ENCODE measurements at regions of chr3 and their contacts with region 1.

Region 1: GRCh38 chr3:59791774-59792308 is 742.0 kb upstream of the CFAP20DC start:
- DNase-seq: no peak
- ATAC-seq: no peak
- H3K4me3 ChIP-seq: no peak overlapping the region
- H3K27ac ChIP-seq: no peak overlapping the region
- H3K4me1 ChIP-seq: no peaks in the 10 kb centered on the region
- H3K27me3 ChIP-seq: no peaks in the 10 kb centered on the region
- CTCF ChIP-seq: no peak

Region 2: DNA sequence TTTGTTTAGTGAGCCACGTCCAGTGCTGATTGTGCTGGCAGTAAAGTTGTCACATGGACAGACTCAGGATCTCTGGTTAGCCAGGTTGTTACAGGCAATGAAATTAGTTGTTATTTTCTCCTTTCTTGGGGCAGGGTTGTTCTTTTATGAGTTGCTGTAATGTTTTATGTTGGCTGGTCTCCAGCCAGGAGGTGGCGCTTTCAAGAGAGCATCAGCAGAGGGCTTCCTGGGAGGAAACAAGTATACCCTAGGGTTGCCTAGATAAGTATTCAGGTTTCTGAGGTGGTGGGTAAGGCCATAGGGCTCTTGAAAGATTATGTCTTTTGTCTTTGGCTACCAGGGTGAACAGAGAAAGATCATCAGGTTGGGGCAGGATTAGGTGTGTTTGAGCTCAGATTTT is 727.6 kb before region 1 on chr3:
- CTCF ChIA-PET with region 1: interaction called, 13 read pairs
- POLR2A ChIA-PET with region 1: no interaction called
- intact Hi-C with region 1: no loop called
- DNase-seq: peak; percentile 29
- ATAC-seq: no peak
- H3K4me3 ChIP-seq: no peak overlapping the region
- H3K27ac ChIP-seq: no peak overlapping the region
- H3K4me1 ChIP-seq: no peaks in the 10 kb centered on the region
- H3K27me3 ChIP-seq: no peaks in the 10 kb centered on the region
- CTCF ChIP-seq: peak; percentile 59

Region 3: DNA sequence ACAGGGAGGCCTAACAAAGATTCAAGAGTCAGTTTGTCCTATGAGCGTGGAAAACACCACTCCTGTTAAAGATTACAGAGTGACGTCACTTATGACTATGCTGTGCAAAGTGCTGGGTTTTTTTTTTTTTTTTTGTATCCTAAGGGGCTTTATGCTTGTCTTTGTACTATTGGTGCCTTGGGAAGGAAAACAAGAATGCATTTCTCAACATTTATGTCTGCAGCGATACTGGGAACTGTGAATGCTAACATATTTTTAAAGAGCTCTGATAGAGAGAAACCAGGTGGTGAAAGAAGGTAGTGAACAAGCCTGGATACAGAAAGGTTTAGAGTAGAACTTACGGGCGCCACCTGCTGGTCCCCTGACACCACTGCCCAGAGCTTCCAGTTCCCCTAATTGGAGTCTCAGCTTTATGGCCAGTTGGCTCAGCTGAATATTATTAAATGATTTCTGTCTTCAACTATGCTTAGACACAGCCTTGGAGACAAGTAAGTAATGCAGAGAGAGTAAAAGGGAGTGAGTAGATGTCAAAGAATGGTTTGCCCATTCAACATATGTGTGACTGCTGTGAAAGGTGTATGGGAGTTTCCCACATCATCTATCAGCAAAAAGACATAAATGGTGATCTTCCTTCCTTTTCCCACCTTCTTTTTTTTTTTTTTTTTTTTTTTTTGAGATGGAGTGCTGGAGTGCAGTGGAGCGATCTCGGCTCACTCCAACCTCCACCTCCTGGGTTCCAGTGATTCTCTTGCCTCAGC is 65.9 kb after region 1 on chr3:
- CTCF ChIA-PET with region 1: no interaction called
- POLR2A ChIA-PET with region 1: no interaction called
- intact Hi-C with region 1: no loop called
- DNase-seq: peak; percentile 86
- ATAC-seq: peak; percentile 99
- H3K4me3 ChIP-seq: no peak overlapping the region
- H3K27ac ChIP-seq: no peak overlapping the region
- H3K4me1 ChIP-seq: peaks cover 10% of the 10 kb centered on the region; the same call in 1 of the 2 replicates
- H3K27me3 ChIP-seq: no peaks in the 10 kb centered on the region
- CTCF ChIP-seq: peak; percentile 96

Measured in PC-3 (cell line).